AG04450 (cell line): ENCODE measurements at regions of chrX and their contacts with region 1.

Region 1: GRCh38 chrX:38220024-38220414 is 652 bp downstream of the SRPX start:
- DNase-seq: no peak
- H3K4me3 ChIP-seq: peak overlapping the region; percentile 65
- H3K27ac ChIP-seq: no peak overlapping the region
- H3K27me3 ChIP-seq: no peaks in the 10 kb centered on the region
- CTCF ChIP-seq: peak; percentile 47

Region 2: GRCh38 chrX:37998586-37999262 is 221.3 kb before region 1 on chrX:
- CTCF ChIA-PET with region 1: no interaction called
- POLR2A ChIA-PET with region 1: no interaction called
- DNase-seq: no peak
- H3K4me3 ChIP-seq: no peak overlapping the region
- H3K27ac ChIP-seq: no peak overlapping the region
- H3K27me3 ChIP-seq: no peaks in the 10 kb centered on the region
- CTCF ChIP-seq: no peak

Region 3: GRCh38 chrX:38233891-38234667 is 14.1 kb after region 1 on chrX:
- CTCF ChIA-PET with region 1: interaction called, 12 read pairs
- POLR2A ChIA-PET with region 1: interaction called, 3 read pairs
- DNase-seq: no peak
- H3K4me3 ChIP-seq: no peak overlapping the region
- H3K27ac ChIP-seq: peak overlapping the region; percentile 80
- H3K27me3 ChIP-seq: no peaks in the 10 kb centered on the region
- CTCF ChIP-seq: no peak

Region 4: GRCh38 chrX:38282044-38282443 is 62.0 kb after region 1 on chrX:
- CTCF ChIA-PET with region 1: interaction called, 21 read pairs
- POLR2A ChIA-PET with region 1: interaction called, 3 read pairs
- DNase-seq: no peak
- H3K4me3 ChIP-seq: no peak overlapping the region
- H3K27ac ChIP-seq: no peak overlapping the region
- H3K27me3 ChIP-seq: no peaks in the 10 kb centered on the region
- CTCF ChIP-seq: peak; percentile 61

Region 5: GRCh38 chrX:38327007-38327774 is 107.2 kb after region 1 on chrX and contains the start of gene RPGR:
- CTCF ChIA-PET with region 1: interaction called, 13 read pairs
- POLR2A ChIA-PET with region 1: no interaction called
- DNase-seq: peak; percentile 70
- H3K4me3 ChIP-seq: peak within 1 kb of the TSS; percentile 74
- H3K27ac ChIP-seq: peak within 1 kb of the TSS; percentile 87
- H3K27me3 ChIP-seq: no peaks in the 10 kb centered on the region
- CTCF ChIP-seq: peak; percentile 77
- polyA plus RNA-seq, gene RPGR: 1.3 and 2.0 TPM in 2 replicates